ENCODE measurements at regions of chr12 and their contacts with region 1.

Region 1: DNA sequence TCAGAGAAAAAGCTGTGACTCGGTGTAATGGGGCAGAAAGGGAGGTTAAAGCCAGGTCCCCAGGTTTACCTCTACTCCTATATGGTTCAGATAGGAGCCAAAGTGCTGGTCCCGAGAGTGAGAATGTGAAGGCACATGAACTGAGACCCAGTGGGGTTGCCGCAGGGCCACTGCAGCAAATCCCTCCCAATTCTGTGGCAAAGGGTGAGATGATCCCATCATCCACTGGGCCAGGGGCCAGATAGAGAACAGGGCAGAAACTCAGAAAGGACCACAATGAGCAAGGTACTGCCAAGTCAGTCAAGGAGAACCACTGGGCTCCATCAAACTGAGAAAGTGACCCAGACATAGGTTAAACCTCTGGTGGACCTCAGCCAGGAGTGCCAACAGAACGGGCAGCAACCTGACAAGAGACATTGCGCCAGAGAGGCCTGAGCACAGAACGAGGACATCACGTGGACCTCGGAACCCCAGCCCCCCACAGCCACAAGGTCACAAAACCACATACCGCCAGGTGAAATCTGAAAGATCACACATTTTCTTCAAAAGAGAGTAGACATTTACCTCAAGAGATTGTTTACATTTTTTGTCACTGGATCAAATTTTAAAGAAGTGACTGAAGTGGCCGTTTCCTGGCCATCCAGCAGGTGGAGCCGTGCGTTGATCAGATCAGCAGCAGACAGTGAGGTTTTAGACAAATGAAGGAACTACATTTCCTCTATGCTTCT is 20.5 kb upstream of the ITPR2 start:
- DNase-seq: peak; percentile 64
- H3K4me3 Mint-ChIP-seq: no peak overlapping the region
- H3K27ac Mint-ChIP-seq: no peak overlapping the region
- H3K4me1 Mint-ChIP-seq: peaks cover 9% of the 10 kb centered on the region
- H3K27me3 Mint-ChIP-seq: no peaks in the 10 kb centered on the region
- CTCF ChIP-seq: peak; percentile 76

Region 2: DNA sequence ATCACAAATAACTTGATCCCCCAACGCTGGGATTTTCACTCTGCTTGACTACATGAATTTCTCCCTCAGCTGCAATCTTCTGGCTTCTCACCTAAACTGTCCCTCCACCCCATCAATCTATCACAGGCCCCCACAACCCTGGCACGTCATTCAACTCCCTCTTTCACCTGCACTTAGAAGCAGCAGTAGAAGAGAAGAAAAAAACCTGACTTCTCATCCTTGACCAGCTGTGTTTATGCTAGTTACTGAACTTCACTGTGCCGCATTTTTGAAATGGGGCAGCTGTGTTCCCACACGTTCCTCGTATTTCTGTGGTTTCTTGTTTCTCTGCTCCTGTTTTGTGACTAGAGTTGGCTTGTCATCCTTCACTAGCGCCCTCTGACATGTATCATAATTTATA is 55.4 kb before region 1 on chr12:
- CTCF ChIA-PET with region 1: no interaction called
- POLR2A ChIA-PET with region 1: no interaction called
- intact Hi-C with region 1: no loop called
- DNase-seq: no peak
- H3K4me3 Mint-ChIP-seq: no peak overlapping the region
- H3K27ac Mint-ChIP-seq: peak overlapping the region; percentile 51
- H3K4me1 Mint-ChIP-seq: peaks cover 13% of the 10 kb centered on the region
- H3K27me3 Mint-ChIP-seq: no peaks in the 10 kb centered on the region
- CTCF ChIP-seq: no peak

Region 3: GRCh38 chr12:26878661-26879119 is 25.2 kb after region 1 on chr12:
- CTCF ChIA-PET with region 1: interaction called, 32 read pairs
- POLR2A ChIA-PET with region 1: interaction called, 5 read pairs
- intact Hi-C with region 1: loop called (anchors 1 kb)
- DNase-seq: peak; percentile 62
- H3K4me3 Mint-ChIP-seq: no peak overlapping the region
- H3K27ac Mint-ChIP-seq: peak overlapping the region; percentile 54
- H3K4me1 Mint-ChIP-seq: peaks cover 9% of the 10 kb centered on the region
- H3K27me3 Mint-ChIP-seq: no peaks in the 10 kb centered on the region
- CTCF ChIP-seq: no peak

Region 4: DNA sequence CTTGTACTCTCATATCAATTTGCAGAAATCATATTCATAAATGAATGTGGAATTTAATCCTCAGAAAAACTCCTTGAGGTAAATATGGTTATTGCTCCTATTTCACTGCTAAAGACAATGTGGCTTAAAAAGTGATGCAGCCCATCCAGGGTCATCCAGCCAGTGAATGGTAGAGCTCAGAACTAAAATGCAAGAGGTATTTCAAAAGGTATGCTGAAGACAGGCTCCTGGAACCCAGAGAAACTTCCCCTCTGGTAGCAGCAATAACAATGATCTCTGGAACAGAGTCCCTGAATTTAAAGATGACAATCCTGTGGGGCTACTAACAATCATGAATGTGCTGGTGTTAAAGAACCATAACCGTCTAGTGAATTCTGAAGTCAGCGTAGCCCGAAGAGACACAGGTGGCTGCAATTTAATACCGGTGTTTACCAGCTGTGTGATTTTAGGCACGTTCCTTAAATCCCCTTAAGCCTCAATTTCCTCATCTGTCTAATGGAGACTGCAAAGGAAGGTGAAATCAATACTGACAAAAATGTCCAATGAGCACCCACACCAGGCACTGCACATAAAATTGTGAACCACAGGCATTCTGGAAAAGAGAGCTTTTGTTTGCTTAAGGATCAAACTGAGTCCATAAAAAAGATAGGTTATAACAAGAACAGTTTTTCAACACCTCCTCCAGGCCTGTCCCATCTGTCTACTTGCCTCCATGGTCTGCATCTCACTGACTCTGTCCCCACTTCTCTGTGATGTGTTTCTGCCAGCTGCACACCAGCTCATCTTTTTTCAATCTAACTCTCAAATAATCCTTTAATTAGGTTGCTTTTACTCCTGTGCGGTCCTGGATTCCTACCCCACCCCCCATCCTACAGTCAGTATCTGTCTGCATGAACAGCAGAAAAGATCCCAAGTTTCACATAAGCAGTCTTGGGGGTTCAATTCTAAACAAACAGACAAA is 150.2 kb after region 1 on chr12:
- CTCF ChIA-PET with region 1: no interaction called
- POLR2A ChIA-PET with region 1: no interaction called
- intact Hi-C with region 1: loop called (anchors 2 kb)
- DNase-seq: no peak
- H3K4me3 Mint-ChIP-seq: no peak overlapping the region
- H3K27ac Mint-ChIP-seq: no peak overlapping the region
- H3K4me1 Mint-ChIP-seq: peaks cover 15% of the 10 kb centered on the region
- H3K27me3 Mint-ChIP-seq: no peaks in the 10 kb centered on the region
- CTCF ChIP-seq: no peak

Measured in MCF 10A (cell line).